Activated CD4-positive, alpha-beta memory T cell treated with anti-CD3 and anti-CD28 coated beads, Interleukin-2, amount 10 ng/mL, durations not matched to agents 7 days and 5 days (primary cell): ENCODE measurements at regions of chr19 and their contacts with region 1.

Region 1: DNA sequence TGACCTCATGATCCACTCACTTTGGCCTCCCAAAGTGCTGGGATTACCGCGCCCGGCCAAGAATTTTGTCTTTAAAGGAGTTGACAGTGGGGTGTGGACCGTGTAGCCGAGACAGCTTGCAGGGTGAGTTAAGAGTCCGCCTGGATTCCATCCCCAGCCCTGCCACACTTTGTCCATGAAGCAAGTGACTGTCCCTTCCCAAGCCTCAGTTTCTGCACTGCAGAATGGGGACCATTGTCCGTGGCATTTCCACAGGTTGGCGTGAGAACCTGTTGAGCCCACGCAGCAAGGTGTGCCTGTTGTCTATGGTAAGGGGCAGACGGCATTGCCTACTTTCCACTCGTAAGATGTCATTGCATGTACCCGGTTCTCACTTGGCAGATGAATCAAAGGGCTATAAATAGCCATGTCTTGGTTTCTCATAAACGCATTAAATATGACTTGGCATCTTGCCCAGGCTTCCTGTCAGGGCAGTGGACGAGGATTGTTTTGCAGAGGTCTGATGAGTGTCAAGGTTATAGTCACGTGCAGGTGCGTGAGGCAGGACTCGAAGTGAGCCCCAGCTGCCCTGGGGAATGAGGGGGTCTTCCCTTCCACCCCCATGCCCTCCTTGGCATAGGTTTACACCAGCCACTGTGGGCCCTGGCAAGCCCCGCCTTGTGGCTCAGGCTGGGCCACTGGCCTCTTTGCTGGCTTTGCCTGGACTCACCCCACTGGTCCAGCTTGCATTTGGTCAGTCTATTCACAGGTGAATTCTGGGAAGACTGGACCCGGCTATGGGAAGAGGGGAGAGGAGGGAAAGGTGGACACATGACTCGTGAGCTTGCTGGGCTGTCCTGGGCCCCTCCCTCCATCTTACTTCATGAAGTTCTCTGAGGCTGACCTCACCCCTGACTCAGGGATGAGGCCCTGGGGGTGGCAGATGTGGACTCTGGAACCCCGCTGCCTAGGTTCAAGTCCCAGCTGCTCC is 14.6 kb downstream of the FAM187B start:
- DNase-seq: peak; percentile 78
- H3K4me3 Mint-ChIP-seq: peak overlapping the region; percentile 7
- H3K27ac Mint-ChIP-seq: peak overlapping the region; percentile 99
- H3K4me1 Mint-ChIP-seq: peaks cover 75% of the 10 kb centered on the region
- H3K27me3 Mint-ChIP-seq: no peaks in the 10 kb centered on the region

Region 2: GRCh38 chr19:35168207-35168606 is 45.7 kb before region 1 on chr19:
- CTCF ChIA-PET with region 1: interaction called, 3 read pairs
- POLR2A ChIA-PET with region 1: interaction called, 12 read pairs
- DNase-seq: no peak
- H3K4me3 Mint-ChIP-seq: no peak overlapping the region
- H3K27ac Mint-ChIP-seq: peak overlapping the region; percentile 54
- H3K4me1 Mint-ChIP-seq: peaks cover 59% of the 10 kb centered on the region
- H3K27me3 Mint-ChIP-seq: no peaks in the 10 kb centered on the region

Region 3: GRCh38 chr19:35240327-35240726 is 26.4 kb after region 1 on chr19:
- CTCF ChIA-PET with region 1: interaction called, 3 read pairs
- POLR2A ChIA-PET with region 1: interaction called, 10 read pairs
- DNase-seq: peak; percentile 15
- H3K4me3 Mint-ChIP-seq: peak overlapping the region; percentile 13
- H3K27ac Mint-ChIP-seq: peak overlapping the region; percentile 75
- H3K4me1 Mint-ChIP-seq: peaks cover 22% of the 10 kb centered on the region
- H3K27me3 Mint-ChIP-seq: peaks cover 29% of the 10 kb centered on the region

Region 4: GRCh38 chr19:35290381-35291127 is 76.6 kb after region 1 on chr19:
- CTCF ChIA-PET with region 1: no interaction called
- POLR2A ChIA-PET with region 1: no interaction called
- DNase-seq: no peak
- H3K4me3 Mint-ChIP-seq: no peak overlapping the region
- H3K27ac Mint-ChIP-seq: no peak overlapping the region
- H3K4me1 Mint-ChIP-seq: peaks cover under 1% of the 10 kb centered on the region
- H3K27me3 Mint-ChIP-seq: peaks cover 4% of the 10 kb centered on the region

Region 5: GRCh38 chr19:35330475-35330874 is 116.5 kb after region 1 on chr19:
- CTCF ChIA-PET with region 1: no interaction called
- POLR2A ChIA-PET with region 1: no interaction called
- DNase-seq: no peak
- H3K4me3 Mint-ChIP-seq: no peak overlapping the region
- H3K27ac Mint-ChIP-seq: no peak overlapping the region
- H3K4me1 Mint-ChIP-seq: peaks cover 13% of the 10 kb centered on the region
- H3K27me3 Mint-ChIP-seq: peaks cover 26% of the 10 kb centered on the region